Endothelial cell of umbilical vein (primary cell): ENCODE measurements at regions of chr7 and their contacts with region 1.

Region 1: DNA sequence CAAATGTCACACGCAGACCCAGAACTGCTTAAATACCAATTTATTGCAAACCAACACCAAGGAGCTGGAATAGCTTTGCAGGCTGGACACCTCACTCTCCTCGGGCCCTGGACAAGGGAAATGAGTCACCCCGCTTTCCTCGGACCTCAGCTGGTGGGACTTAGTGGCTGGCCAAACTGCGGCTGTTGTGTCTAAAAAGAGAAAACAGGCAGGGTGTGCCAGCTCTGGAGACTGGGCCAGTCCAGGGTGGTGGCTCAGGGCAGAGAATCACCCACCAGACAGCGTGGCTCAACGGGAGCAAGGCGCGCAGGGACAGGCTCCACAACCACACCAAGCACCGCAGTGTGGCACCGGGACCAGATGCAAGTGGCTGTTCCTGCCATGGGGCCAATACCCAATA is 58.2 kb upstream of the CAMK2B start:
- DNase-seq: peak; percentile 87
- H3K4me3 ChIP-seq: no peak overlapping the region
- H3K27ac ChIP-seq: peak overlapping the region; percentile 79
- H3K4me1 ChIP-seq: peaks cover 59% of the 10 kb centered on the region
- H3K27me3 ChIP-seq: no peaks in the 10 kb centered on the region
- CTCF ChIP-seq: no peak
- POLR2A ChIP-seq: no peak

Region 2: GRCh38 chr7:44460325-44460724 is 76.8 kb after region 1 on chr7:
- CTCF ChIA-PET with region 1: interaction called, 3 read pairs
- POLR2A ChIA-PET with region 1: no interaction called
- dilution Hi-C with region 1: no loop called
- intact Hi-C with region 1: loop called (anchors 2 kb)
- DNase-seq: no peak
- H3K4me3 ChIP-seq: no peak overlapping the region
- H3K27ac ChIP-seq: no peak overlapping the region
- H3K4me1 ChIP-seq: peaks cover 30% of the 10 kb centered on the region
- H3K27me3 ChIP-seq: no peaks in the 10 kb centered on the region
- CTCF ChIP-seq: no peak
- POLR2A ChIP-seq: no peak